Cardiac septum (tissue), 1 donor: ENCODE measurements at regions of chr2 and their contacts with region 1.

Region 1: DNA sequence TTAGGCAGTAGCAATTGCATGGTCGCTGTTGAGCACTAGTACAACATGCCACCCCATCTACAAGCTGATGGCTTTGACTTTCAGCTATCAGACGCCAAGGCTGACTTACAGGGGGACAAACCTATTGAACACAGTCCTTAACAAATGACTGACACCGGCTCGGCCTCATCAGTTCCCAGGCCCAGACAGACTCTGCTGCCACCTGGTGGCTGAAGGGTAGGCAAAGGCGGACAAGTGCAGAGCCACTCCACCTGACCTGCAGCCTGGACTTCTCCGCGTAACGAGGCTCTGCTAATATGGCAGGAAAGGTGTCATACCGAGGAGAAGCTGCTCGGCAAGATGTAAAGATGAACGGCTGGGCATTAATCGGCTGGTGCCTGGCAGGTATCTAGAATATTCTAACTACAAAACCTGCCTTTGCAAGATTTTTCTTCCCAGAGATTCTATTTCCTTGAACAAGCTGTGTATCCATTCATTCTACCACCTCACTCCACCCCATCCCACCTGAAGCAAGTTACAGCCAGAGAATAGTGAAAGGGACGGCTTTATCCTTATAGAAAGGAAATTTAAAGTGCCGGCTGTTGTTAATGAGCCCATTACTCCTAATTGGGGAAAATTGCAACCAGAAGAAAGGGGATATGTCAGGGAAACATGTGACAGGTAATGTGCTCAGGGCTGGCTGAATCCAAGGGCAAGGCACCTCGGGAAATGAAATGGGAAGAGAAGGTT is 67.4 kb downstream of the STEAP3 start:
- DNase-seq: peak; percentile 90

Region 2: DNA sequence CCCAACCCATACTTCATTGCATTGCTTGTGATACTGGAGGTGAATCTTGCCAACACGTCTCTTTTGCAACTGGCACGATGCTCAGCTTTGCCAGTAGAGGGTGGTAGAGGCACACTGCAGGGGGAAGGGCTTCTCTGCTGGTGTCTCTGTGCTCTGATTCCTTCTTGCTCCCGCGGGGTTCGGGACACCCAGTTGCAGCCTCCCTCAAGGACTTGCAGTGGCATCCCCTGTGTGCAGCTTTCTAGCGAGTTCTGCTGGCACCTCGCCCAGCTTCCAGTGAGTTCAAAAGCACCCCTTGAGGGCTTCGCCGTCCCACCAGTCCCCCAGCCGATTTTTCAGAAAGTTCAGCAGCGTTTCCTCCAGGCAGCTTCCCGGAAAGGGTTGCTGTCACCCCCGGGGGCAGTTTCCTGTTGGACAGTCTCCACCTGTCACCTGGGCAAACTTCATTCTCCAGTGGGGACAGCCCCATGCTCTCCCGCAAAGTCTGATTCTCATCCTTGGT is 408.3 kb before region 1 on chr2:
- intact Hi-C with region 1: loop called (anchors 5 kb)
- DNase-seq: peak; percentile 80

Region 3: DNA sequence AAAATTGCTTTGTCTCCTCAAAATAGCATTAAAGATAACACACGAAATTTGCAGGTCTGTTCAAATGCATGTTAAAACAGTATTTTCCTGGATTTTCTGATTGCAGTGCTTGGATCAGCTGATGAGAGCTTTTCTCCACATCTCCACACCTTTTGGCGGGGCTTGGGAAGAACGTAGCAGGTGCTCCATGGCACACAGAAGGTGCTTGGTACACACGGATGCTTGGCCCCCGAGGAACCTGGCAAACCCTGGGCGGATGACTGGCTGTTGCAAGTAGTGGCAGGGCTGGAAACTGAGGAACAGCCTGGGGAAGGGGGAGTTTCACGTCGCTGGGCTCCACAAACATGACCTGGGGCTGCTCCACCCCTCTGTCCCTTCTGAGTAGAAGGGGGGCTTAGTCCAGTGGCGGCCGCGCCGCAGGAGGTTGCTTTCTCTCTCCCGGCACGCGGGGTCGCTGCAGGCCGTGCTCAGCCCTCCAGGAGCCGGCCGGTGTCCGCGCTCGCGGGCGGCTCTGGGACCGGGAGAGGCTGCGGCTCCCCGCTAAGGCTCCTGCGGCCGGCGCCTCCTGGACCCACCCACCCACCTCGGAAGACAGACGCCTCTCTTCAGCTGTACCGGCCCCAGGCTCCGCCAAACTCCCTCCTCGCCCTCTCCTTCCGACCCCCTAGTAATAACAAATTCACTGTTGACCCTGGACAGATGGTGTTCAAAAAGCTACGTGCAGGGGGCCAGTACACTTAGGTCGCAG is 279.7 kb before region 1 on chr2:
- intact Hi-C with region 1: loop called (anchors 2 kb)
- DNase-seq: no peak

Region 4: GRCh38 chr2:119028327-119029174 is 262.5 kb before region 1 on chr2:
- intact Hi-C with region 1: loop called (anchors 5 kb)
- DNase-seq: no peak

Region 5: GRCh38 chr2:119223521-119224390 is 67.3 kb before region 1 on chr2 and contains the start of gene STEAP3:
- intact Hi-C with region 1: loop called (anchors 5 kb)
- DNase-seq: peak; percentile 90
- total RNA-seq, gene STEAP3: 10.7 TPM

Region 6: GRCh38 chr2:119234377-119235019 is 56.5 kb before region 1 on chr2:
- intact Hi-C with region 1: no loop called
- DNase-seq: no peak

Region 7: DNA sequence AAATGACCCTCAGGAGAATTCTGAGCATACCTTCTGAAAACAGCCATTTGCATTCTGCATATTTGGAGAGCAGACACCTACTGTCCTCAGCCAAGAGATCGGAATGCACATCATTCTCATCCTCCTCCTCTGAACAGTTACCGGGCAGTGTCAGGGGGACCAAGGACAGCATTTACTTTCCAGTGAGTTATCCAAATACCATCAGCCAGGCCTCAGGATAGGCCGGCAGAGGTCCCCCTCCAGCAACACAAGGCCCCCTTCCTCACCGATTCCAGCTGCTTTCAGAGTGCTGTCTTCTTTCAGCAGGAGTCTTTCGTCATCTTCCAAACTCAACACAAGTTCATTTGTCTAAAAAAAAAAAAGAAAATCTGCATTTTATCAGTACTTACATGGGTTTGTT is 20.3 kb after region 1 on chr2:
- intact Hi-C with region 1: no loop called
- DNase-seq: no peak